ENCODE measurements at regions of chr7 and their contacts with region 1.

Region 1: DNA sequence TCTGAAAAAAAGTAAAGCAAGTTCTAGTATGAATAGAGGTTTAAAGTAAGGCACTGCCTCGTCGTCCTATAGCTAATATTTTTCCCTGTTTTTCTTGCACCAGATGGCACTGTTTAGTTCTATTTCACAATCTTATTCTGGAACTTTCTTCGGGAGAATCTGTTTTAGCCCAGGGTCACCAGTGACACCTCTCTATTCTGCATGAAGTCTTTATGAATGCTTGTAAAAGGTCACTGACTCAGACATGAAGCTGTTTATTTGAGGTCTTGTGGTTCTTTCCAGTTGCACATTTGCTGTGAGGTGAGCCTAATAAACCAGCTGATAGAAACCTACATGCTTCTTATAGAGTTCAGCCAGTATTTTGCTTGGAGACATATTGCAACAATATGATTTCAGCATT is 444.3 kb downstream of the AUTS2 start:
- DNase-seq: no peak
- ATAC-seq: no peak
- H3K4me3 ChIP-seq: no peak overlapping the region
- H3K27ac ChIP-seq: no peak overlapping the region
- H3K4me1 ChIP-seq: no peaks in the 10 kb centered on the region
- H3K27me3 ChIP-seq: no peaks in the 10 kb centered on the region
- CTCF ChIP-seq: peak in 1 of 3 experiments; percentile 10; a peak in 1 of 6 replicates
- EP300 ChIP-seq: no peak
- POLR2A ChIP-seq: no peak
- RAD21 ChIP-seq: 0 out of 4 replicates have a peak, but pooled peaks of 1 of the 2 experiments have one; percentile 12

Region 2: DNA sequence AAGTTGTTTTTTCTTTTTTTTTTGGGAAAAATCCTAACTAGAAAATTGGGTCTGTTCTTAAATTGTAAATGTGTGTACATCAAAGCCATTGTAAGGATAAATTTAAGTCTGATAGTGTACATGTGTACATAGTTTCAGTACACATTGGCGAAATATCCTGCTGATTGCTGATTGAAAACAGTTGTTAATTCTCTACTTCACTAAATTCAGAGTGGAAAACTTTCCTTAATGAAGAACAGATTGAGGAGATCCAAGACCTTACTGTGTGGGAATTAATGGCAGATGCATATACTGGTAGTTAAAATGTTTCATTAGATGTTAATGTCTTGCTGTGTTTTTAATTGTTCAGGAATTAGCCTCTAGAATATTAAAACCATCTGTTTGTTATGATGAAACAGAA is 61.7 kb after region 1 on chr7:
- CTCF ChIA-PET with region 1: no interaction called
- POLR2A ChIA-PET with region 1: no interaction called
- in situ Hi-C with region 1: no loop called
- intact Hi-C with region 1: no loop called
- DNase-seq: no peak
- ATAC-seq: no peak
- H3K4me3 ChIP-seq: no peak overlapping the region
- H3K27ac ChIP-seq: no peak overlapping the region
- H3K4me1 ChIP-seq: no peaks in the 10 kb centered on the region
- H3K27me3 ChIP-seq: no peaks in the 10 kb centered on the region
- CTCF ChIP-seq: no peak
- EP300 ChIP-seq: no peak
- POLR2A ChIP-seq: no peak
- RAD21 ChIP-seq: no peak

Region 3: GRCh38 chr7:70156057-70156456 is 113.5 kb after region 1 on chr7:
- CTCF ChIA-PET with region 1: no interaction called
- POLR2A ChIA-PET with region 1: no interaction called
- in situ Hi-C with region 1: no loop called
- intact Hi-C with region 1: loop called (anchors 2 kb)
- DNase-seq: no peak
- ATAC-seq: no peak
- H3K4me3 ChIP-seq: no peak overlapping the region
- H3K27ac ChIP-seq: no peak overlapping the region
- H3K4me1 ChIP-seq: no peaks in the 10 kb centered on the region
- H3K27me3 ChIP-seq: no peaks in the 10 kb centered on the region
- CTCF ChIP-seq: no peak
- EP300 ChIP-seq: no peak
- POLR2A ChIP-seq: no peak
- RAD21 ChIP-seq: no peak

Measured in K562 (cell line).